Activated B cell treated with CpG ODN at 0.5 μM for 24 hours (primary cell): ENCODE measurements at regions of chr17 and their contacts with region 1.

Region 1: DNA sequence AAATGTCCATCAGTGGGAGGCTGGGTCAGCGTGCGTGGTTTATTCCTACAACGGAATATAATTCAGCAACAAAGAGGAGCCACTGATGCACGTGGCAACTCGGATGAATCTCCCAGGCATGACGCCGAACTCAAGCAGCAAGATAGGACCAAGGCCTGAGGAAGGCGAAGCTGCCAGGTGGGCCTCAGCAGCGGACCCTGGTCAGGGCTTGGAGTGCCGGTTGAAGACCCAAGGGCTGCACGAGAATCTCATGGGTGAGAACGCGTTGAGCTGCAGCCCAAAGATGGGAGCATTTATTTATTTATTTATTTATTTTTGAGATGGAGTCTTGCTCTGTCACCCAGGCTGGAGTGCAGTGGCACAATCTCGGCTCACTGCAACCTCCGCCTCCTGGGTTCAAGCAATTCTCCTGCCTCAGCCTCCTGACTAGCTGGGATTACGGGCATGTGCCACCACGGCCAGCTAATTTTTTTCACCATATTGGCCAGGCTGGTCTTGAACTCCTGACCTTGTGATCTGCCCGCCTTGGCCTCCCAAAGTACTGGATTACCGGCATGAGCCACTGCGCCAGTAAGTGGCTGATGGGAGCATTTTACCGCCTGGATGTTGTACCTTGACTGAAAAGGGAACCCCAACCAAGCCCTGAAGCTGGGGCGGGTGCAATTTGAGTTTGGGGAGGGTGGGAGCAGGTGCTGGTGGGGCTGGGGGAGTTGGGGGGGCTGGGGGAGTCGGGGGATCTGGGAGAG is 18.1 kb upstream of the BAHCC1 start:
- DNase-seq: no peak
- ATAC-seq: no peak
- H3K4me3 Mint-ChIP-seq: no peak overlapping the region
- H3K27ac Mint-ChIP-seq: no peak overlapping the region
- H3K4me1 Mint-ChIP-seq: no peaks in the 10 kb centered on the region
- H3K27me3 Mint-ChIP-seq: peaks cover 3% of the 10 kb centered on the region
- CTCF ChIP-seq: no peak

Region 2: GRCh38 chr17:81337476-81337879 is 39.6 kb before region 1 on chr17:
- CTCF ChIA-PET with region 1: no interaction called
- POLR2A ChIA-PET with region 1: interaction called, 11 read pairs
- intact Hi-C with region 1: no loop called
- DNase-seq: no peak
- ATAC-seq: no peak
- H3K4me3 Mint-ChIP-seq: no peak overlapping the region
- H3K27ac Mint-ChIP-seq: no peak overlapping the region
- H3K4me1 Mint-ChIP-seq: no peaks in the 10 kb centered on the region
- H3K27me3 Mint-ChIP-seq: peaks cover 35% of the 10 kb centered on the region
- CTCF ChIP-seq: no peak

Region 3: DNA sequence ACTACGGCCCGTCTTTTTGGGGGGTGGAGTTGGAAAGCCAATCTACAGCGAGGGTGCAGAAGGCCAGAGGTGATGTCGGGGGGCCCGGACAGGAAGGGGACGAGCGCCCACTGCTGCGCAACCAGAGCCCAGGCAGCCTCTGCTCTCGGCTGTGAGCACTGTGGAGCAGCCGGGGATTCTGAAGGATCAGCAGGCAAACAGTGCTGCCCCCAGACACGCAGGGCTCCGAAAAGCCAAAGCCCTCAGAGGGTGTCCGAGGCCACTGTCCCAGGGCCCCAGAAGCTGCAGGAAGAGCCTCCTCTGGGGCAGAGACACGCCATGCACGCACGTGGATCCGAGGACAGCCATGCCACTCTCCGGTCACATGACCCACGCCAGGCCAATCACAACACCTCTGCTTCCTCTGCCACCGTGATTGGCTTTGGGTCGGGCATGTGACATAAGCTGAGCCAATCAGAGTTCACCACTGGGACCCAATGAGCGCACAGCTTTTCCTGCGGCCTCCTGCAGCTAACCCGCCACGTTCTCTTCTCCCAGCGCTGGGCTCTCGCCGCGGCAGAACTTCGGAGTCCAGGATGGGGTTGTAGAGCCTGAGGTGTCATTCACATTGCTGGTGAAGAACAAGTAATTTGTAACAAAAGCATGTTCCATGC is 94.8 kb after region 1 on chr17:
- CTCF ChIA-PET with region 1: no interaction called
- POLR2A ChIA-PET with region 1: no interaction called
- intact Hi-C with region 1: no loop called
- DNase-seq: no peak
- ATAC-seq: no peak
- H3K4me3 Mint-ChIP-seq: no peak overlapping the region
- H3K27ac Mint-ChIP-seq: no peak overlapping the region
- H3K4me1 Mint-ChIP-seq: no peaks in the 10 kb centered on the region
- H3K27me3 Mint-ChIP-seq: no peaks in the 10 kb centered on the region
- CTCF ChIP-seq: no peak